Mucosa of descending colon (tissue), 3 donors: ENCODE measurements at regions of chr10 and their contacts with region 1.

Region 1: DNA sequence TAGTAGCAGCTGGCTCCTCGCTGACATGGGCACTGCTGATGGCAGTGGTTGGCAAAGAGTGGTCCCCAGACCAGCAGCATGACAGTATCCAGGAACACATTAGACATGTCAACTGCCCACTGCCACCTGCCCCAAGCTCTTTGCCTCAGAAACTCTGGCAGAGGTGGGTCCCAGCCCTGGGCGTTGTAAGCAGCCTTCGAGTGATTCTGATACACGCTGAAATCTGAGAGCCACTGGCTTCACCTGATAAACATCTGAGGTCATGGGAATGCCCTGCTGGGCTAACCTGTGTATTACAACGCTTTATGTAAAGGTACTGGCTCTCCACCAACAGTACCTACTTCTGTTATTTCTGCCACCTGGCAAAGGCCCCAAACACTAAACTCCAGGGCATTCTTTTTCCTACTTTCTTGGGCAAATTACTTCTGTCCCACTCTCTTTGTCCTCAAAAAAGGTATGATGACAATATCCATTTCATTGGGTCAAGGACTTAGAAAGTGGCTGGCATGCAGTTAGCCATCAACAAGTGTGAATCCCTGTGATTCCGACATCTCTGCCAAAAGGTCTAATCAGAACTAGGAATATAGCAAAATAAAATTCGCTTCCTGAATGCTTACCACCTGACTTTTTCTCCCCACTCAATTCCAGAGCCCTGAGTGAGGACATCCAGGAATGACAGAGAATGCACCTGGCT is 9.2 kb downstream of the SGMS1 start:
- DNase-seq: peak in 1 of 3 donors; percentile 46
- ATAC-seq: peak; percentile 85
- H3K4me3 ChIP-seq: no peak overlapping the region
- H3K4me1 ChIP-seq: no peaks in the 10 kb centered on the region
- CTCF ChIP-seq: no peak

Region 2: GRCh38 chr10:50480054-50481007 is 134.3 kb before region 1 on chr10:
- intact Hi-C with region 1: no loop called
- DNase-seq: no peak
- ATAC-seq: peak; percentile 28
- H3K4me3 ChIP-seq: no peak overlapping the region
- H3K4me1 ChIP-seq: no peaks in the 10 kb centered on the region
- CTCF ChIP-seq: no peak

Region 3: GRCh38 chr10:50561816-50562215 is 52.8 kb before region 1 on chr10:
- intact Hi-C with region 1: loop called in 1 of 2 experiments (anchors 5 kb)
- DNase-seq: no peak
- ATAC-seq: peak; percentile 47
- H3K4me3 ChIP-seq: no peak overlapping the region
- H3K4me1 ChIP-seq: no peaks in the 10 kb centered on the region
- CTCF ChIP-seq: peak; percentile 41

Region 4: DNA sequence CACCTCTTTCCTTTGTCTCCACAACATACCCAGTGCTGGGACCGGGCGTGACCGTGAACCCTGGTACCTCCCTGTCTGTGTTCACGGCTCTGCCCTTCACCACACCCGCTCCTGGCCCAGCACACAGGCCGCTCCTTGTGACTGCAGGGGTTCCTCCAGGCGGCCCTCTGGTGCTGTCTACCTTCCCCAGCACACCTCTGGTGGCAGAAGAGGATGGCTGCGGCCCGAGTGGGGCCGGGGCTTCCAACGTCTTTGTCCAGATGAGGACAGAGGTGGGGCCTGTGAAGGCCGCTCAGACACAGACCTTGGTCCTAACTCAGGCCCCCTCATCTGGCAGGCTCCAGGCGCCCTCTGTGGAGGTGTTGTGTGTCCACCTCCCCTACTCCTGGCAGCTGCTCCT is 64.6 kb after region 1 on chr10:
- intact Hi-C with region 1: no loop called
- DNase-seq: no peak
- ATAC-seq: no peak
- H3K4me3 ChIP-seq: no peak overlapping the region
- H3K4me1 ChIP-seq: no peaks in the 10 kb centered on the region
- CTCF ChIP-seq: no peak